ENCODE measurements at regions of chr12 and their contacts with region 1.

Region 1: DNA sequence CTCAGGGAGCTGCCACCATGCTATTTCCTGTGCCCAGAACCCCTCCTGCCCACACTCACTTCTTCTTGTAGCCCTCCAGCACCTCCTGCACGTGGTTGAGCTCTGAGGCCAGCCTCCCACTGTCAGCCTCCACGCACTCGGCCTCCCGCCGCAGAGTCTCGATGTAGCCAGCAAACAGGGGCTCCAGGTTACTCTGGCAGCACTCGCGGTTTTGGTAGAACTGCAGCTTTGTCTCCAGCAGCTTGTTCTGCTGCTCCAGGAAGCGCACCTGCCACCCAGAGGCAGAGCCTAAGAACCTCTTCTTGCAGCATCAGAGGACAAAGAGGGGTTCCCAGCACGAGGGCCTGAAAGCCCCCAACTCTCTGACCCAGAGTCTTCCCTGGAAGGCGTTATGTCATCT is 2.1 kb downstream of the KRT83 start:
- DNase-seq: no peak
- H3K4me3 ChIP-seq: no peak overlapping the region
- H3K27ac ChIP-seq: no peak overlapping the region
- H3K4me1 ChIP-seq: no peaks in the 10 kb centered on the region
- H3K27me3 ChIP-seq: no peaks in the 10 kb centered on the region
- CTCF ChIP-seq: peak; percentile 4 to 40 (median 18)
- EP300 ChIP-seq: no peak
- POLR2A ChIP-seq: no peak
- RAD21 ChIP-seq: peak; percentile 23 to 53; a peak in 3 of 4 replicates

Region 2: GRCh38 chr12:52171950-52172512 is 147.1 kb before region 1 on chr12:
- CTCF ChIA-PET with region 1: interaction called, 15 read pairs
- POLR2A ChIA-PET with region 1: no interaction called
- DNase-seq: peak in 1 of 2 experiments; percentile 80
- H3K4me3 ChIP-seq: no peak overlapping the region
- H3K27ac ChIP-seq: no peak overlapping the region
- H3K4me1 ChIP-seq: peaks cover 0 to 2% (median 0%) of the 10 kb centered on the region in 4 experiments; a peak in 2 of 7 replicates
- H3K27me3 ChIP-seq: no peaks in the 10 kb centered on the region
- CTCF ChIP-seq: peak; percentile 79 to 86 (median 81)
- EP300 ChIP-seq: no peak
- POLR2A ChIP-seq: no peak
- RAD21 ChIP-seq: peak; percentile 47 to 67; a peak in 3 of 4 replicates

Region 3: GRCh38 chr12:52249051-52249461 is 70.0 kb before region 1 on chr12:
- CTCF ChIA-PET with region 1: interaction called, 14 read pairs
- POLR2A ChIA-PET with region 1: no interaction called
- DNase-seq: no peak
- H3K4me3 ChIP-seq: no peak overlapping the region
- H3K27ac ChIP-seq: no peak overlapping the region
- H3K4me1 ChIP-seq: peaks cover 0 to 12% (median 5%) of the 10 kb centered on the region in 4 experiments; a peak in 5 of 7 replicates
- H3K27me3 ChIP-seq: peaks cover 4 to 29% (median 23%) of the 10 kb centered on the region in 4 experiments
- CTCF ChIP-seq: no peak
- EP300 ChIP-seq: no peak
- POLR2A ChIP-seq: no peak
- RAD21 ChIP-seq: no peak

Region 4: DNA sequence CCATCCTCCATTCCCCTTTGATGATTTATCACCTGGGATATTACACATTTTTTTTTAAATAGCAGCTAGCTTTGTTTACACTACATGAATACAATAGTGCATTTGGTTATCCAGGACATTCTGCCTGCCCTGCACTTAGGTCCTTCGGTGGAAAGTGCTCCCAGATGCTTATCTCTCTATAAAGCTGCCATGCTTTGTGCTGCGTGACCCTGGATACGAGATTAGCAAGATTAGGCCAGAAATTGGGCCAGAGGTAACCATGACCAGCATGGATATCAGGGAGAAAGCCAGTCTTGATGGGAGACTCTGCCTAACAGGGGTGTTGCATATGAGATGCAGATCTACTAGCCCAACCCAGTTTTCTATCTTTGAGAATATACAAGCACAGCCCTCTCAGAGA is 14.2 kb after region 1 on chr12:
- CTCF ChIA-PET with region 1: interaction called, 353 read pairs
- POLR2A ChIA-PET with region 1: interaction called, 3 read pairs
- DNase-seq: no peak
- H3K4me3 ChIP-seq: no peak overlapping the region
- H3K27ac ChIP-seq: no peak overlapping the region
- H3K4me1 ChIP-seq: peaks cover 0 to 3% (median 0%) of the 10 kb centered on the region in 4 experiments; a peak in 1 of 7 replicates
- H3K27me3 ChIP-seq: no peaks in the 10 kb centered on the region
- CTCF ChIP-seq: no peak
- EP300 ChIP-seq: no peak
- POLR2A ChIP-seq: no peak
- RAD21 ChIP-seq: no peak

Region 5: DNA sequence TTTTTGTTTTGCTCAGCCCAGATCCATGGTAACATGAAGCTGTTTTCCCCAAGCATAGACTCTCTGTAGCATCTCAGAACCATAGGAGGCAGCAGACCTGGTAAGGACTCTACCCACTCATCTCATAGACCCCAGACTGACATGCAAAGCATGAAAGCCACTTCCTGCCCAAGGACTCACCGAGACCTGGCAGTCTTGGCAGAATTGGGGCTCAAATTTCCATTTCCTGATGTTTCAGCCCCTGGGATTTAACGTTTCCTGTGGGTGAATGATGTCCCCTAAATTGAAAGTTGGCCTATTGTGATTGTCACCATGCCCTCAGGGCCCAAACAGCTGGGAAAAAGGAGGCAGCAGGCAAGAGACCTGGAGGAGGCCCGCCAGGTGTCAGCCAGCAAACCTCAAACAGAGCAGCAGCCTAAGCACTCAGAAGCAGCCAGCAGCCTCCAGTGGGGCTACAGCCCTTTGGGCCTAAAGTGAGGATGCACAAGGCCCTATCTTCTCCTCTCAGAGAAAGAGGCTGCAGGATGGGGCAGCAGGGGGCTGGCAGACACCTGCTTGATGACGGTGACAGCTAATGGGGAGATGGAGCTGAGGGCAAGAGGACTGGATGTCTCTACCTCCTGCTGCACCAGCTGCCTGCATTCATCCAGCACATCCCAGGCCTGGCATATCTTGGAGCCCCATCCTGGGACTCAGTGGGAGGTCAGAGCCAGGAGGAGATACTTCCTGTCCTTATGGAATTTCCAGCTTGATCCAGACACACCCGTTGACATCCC is 39.7 kb after region 1 on chr12:
- CTCF ChIA-PET with region 1: interaction called, 11 read pairs
- POLR2A ChIA-PET with region 1: no interaction called
- DNase-seq: no peak
- H3K4me3 ChIP-seq: no peak overlapping the region
- H3K27ac ChIP-seq: no peak overlapping the region
- H3K4me1 ChIP-seq: no peaks in the 10 kb centered on the region
- H3K27me3 ChIP-seq: no peaks in the 10 kb centered on the region
- CTCF ChIP-seq: no peak
- EP300 ChIP-seq: no peak
- POLR2A ChIP-seq: no peak
- RAD21 ChIP-seq: no peak

Region 6: DNA sequence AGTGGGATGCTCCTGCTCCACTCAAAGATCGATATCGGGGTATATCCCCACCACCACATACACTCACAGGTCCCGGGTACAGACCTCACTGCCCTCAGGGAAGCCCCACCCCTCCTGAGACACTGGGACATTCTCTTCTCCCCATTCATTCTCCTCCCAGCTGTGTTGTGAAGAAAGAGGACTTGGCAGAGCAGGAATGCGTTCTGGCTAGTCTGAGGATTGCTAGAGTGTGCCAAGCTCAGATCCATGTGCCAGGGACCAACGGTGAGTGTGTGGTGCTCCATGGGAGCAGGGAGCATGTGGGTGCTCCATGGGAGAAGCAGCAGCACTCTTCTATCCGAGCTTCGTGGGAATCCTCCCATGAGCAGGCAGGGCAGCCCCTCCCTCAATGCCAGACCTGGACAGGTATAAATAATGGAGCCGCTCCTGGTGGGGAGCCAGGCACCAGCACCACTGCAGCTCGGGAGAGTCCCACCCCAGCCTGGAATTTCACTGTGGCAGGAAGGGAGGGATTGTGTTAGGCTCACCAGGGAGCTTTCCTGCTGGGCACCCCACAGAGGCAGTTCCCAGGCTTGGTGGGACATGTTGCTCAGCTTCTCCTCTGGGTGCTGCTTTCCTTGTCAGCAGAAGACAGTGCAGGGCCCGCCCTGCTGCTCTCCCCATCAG is 203.4 kb after region 1 on chr12:
- CTCF ChIA-PET with region 1: no interaction called
- POLR2A ChIA-PET with region 1: no interaction called
- DNase-seq: peak in 1 of 2 experiments; percentile 27
- H3K4me3 ChIP-seq: no peak overlapping the region
- H3K27ac ChIP-seq: no peak overlapping the region
- H3K4me1 ChIP-seq: peaks cover 0 to 1% (median 0%) of the 10 kb centered on the region in 4 experiments; a peak in 1 of 7 replicates
- H3K27me3 ChIP-seq: no peaks in the 10 kb centered on the region; a peak in 1 of 7 replicates
- CTCF ChIP-seq: no peak
- EP300 ChIP-seq: no peak
- POLR2A ChIP-seq: no peak
- RAD21 ChIP-seq: no peak

Region 7: DNA sequence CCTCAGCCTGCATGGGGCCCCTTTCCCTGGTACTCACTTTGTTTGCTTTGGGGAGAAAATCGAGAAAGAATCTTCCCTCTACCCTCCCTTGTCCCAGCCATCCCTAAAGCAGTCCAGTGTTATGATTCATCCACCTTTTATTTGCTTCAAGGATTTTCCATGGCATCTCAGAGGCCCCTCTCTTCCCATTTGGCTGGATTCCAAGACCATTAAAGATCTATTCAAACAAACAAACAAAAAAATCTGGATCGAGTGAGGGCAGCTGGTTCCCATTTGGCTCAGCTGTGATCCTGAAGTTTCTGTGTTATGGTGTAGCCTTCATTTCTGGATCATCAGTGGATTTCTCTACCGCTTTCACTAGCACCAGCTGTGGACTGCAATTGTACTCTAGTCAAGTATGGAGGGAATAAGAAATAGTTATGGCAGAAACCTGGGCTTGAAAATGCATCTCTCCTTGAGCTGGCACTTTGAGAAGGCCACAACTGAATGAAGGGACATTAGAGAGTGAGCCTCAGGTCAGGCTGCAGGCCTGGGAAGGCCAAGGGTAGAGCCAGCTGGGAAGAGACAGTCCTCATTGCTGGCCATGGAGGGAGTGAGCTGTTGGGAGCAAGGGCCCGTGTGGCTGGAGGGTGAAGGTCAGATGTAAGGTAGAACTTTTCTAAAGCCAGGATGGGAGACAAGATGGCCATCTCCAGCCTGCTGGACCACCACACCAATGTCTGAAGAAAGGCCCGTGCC is 220.2 kb after region 1 on chr12:
- CTCF ChIA-PET with region 1: no interaction called
- POLR2A ChIA-PET with region 1: no interaction called
- DNase-seq: no peak
- H3K4me3 ChIP-seq: no peak overlapping the region
- H3K27ac ChIP-seq: no peak overlapping the region
- H3K4me1 ChIP-seq: no peaks in the 10 kb centered on the region
- H3K27me3 ChIP-seq: no peaks in the 10 kb centered on the region
- CTCF ChIP-seq: no peak
- EP300 ChIP-seq: no peak
- POLR2A ChIP-seq: no peak
- RAD21 ChIP-seq: no peak

Measured in H1 (cell line).